BJ (cell line): ENCODE measurements at regions of chr16 and their contacts with region 1.

Region 1: GRCh38 chr16:14529010-14529669 is 100.9 kb downstream of the PARN start:
- DNase-seq: peak; percentile 53
- H3K4me3 ChIP-seq: no peak overlapping the region
- H3K27me3 ChIP-seq: no peaks in the 10 kb centered on the region
- CTCF ChIP-seq: peak; percentile 66

Region 2: GRCh38 chr16:14249291-14250032 is 279.7 kb before region 1 on chr16:
- CTCF ChIA-PET with region 1: interaction called, 24 read pairs
- POLR2A ChIA-PET with region 1: no interaction called
- DNase-seq: no peak
- H3K4me3 ChIP-seq: no peak overlapping the region
- H3K27me3 ChIP-seq: no peaks in the 10 kb centered on the region
- CTCF ChIP-seq: peak; percentile 88

Region 3: GRCh38 chr16:14285513-14286385 is 243.4 kb before region 1 on chr16:
- CTCF ChIA-PET with region 1: interaction called, 15 read pairs
- POLR2A ChIA-PET with region 1: no interaction called
- DNase-seq: no peak
- H3K4me3 ChIP-seq: peak overlapping the region; percentile 90
- H3K27me3 ChIP-seq: no peaks in the 10 kb centered on the region
- CTCF ChIP-seq: no peak

Region 4: DNA sequence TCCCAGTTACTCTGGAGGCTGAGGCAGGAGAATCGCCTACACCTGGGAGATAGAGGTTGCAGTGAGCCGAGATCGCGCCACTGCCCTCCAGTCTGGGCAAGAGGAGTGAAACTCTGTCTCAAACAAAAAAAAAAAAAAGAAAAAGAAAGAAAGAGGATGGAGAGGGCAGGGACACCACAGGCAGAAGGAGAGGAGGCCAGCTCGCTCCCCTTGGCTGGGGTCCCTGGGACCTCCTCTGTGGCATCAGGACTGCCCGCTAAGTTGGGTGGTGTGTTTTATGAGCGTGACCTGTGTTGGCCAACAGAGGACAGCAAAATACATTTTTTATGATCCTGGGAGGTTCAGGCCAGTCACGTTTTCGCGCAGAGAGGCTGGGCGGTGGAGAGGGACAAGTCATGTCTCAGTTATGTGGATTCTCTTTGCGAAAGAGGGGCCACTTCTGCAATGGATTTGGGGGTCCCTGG is 228.4 kb before region 1 on chr16:
- CTCF ChIA-PET with region 1: interaction called, 22 read pairs
- POLR2A ChIA-PET with region 1: no interaction called
- DNase-seq: no peak
- H3K4me3 ChIP-seq: peak overlapping the region; percentile 67
- H3K27me3 ChIP-seq: no peaks in the 10 kb centered on the region
- CTCF ChIP-seq: peak; percentile 68

Region 5: GRCh38 chr16:14310519-14310991 is 218.6 kb before region 1 on chr16:
- CTCF ChIA-PET with region 1: interaction called, 10 read pairs
- POLR2A ChIA-PET with region 1: interaction called, 3 read pairs
- DNase-seq: no peak
- H3K4me3 ChIP-seq: no peak overlapping the region
- H3K27me3 ChIP-seq: no peaks in the 10 kb centered on the region
- CTCF ChIP-seq: 0 out of 2 replicates have a peak, but pooled peaks have one; percentile 8